Caco-2 (cell line): ENCODE measurements at regions of chr20 and their contacts with region 1.

Region 1: DNA sequence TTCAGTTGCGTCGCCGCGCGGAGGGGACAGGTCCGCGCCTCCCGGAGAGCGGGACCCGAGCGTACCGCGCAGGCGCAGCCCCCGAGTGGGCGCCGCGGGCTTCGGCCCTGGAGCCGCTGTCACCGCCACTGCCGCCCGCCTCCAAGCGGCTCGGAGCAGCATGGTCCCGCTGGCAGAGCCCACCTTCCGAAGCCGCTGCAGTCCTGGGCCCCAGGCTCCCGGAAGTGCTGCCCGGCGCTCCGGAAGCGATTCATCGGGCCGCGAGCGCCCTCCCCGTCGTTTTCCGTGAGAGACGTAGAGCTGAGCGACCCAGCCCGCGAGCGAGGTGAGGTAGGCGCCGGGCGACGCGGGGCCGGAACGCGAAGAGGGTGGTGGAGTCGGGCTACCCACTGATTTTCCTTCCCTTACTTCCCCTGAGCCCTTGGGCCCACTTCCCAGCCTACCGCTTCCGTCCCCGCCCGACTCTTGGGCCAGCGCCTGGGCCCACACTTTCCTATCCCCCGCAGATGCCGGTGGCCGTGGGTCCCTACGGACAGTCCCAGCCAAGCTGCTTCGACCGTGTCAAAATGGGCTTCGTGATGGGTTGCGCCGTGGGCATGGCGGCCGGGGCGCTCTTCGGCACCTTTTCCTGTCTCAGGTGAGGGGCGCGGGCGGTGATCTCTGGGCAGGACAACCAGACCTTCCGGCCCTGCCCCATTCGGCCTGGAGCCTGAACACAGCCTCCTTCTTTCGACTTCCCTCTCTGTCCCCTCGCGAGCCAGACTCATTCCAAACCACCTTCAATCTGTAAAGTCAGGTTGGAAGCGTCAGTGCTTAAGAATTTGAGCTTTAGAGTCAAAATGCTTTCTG is at the starts of genes NFS1 and ROMO1:
- DNase-seq: peak; percentile 95 to 98
- H3K4me3 ChIP-seq: peak within 1 kb of the TSS; percentile 93
- H3K4me3 Mint-ChIP-seq: peak within 1 kb of the TSS; percentile 91
- H3K27ac Mint-ChIP-seq: peak within 1 kb of the TSS; percentile 85
- H3K4me1 ChIP-seq: peaks cover 22% of the 10 kb centered on the region
- H3K4me1 Mint-ChIP-seq: peaks cover 35% of the 10 kb centered on the region
- H3K27me3 ChIP-seq: no peaks in the 10 kb centered on the region
- H3K27me3 Mint-ChIP-seq: no peaks in the 10 kb centered on the region
- CTCF ChIP-seq: peak; percentile 32 to 52
- total RNA-seq, gene NFS1: 69.8 and 77.1 TPM in 2 replicates
- total RNA-seq, gene ROMO1: 354 and 357 TPM in 2 replicates

Region 2: GRCh38 chr20:35463455-35464300 is 235.7 kb before region 1 on chr20:
- CTCF ChIA-PET with region 1: no interaction called
- POLR2A ChIA-PET with region 1: no interaction called
- intact Hi-C with region 1: loop called (anchors 5 kb)
- DNase-seq: peak; percentile 83 to 88
- H3K4me3 ChIP-seq: no peak overlapping the region
- H3K4me3 Mint-ChIP-seq: no peak overlapping the region
- H3K27ac Mint-ChIP-seq: no peak overlapping the region
- H3K4me1 ChIP-seq: peaks cover 13% of the 10 kb centered on the region
- H3K4me1 Mint-ChIP-seq: peaks cover 18% of the 10 kb centered on the region
- H3K27me3 ChIP-seq: no peaks in the 10 kb centered on the region
- H3K27me3 Mint-ChIP-seq: no peaks in the 10 kb centered on the region
- CTCF ChIP-seq: peak; percentile 96 to 97

Region 3: DNA sequence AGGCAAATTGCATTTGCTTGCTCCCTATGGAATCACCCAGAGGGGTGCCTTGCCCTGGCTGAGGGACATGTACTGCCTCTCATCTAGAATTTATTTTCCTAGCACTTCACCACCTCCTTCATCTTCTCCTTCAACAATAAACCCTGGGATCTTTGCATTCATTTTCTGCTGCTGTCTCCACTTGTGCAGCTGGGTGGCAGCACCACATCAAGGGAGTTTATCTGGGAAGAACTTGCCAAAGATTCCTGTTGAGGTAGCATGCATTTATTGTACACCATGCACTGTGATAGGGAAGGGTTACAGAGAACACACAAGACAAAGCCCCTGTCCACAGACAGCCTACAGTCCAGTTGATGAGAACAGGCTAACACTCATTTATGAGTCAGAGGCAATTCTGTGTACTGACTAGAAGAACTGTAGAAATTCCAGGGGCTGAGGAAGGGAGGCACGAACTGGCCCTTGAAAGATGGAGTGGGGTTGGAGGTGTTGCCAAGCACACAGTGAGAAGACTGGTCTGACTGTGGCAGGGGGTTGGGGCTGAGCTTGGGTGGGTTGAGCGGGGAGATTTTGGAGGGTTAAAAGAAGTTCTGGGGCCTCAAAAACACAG is 187.4 kb before region 1 on chr20:
- CTCF ChIA-PET with region 1: interaction called, 4 read pairs
- POLR2A ChIA-PET with region 1: no interaction called
- intact Hi-C with region 1: loop called (anchors 1 kb)
- DNase-seq: peak in 1 of 2 experiments; percentile 68
- H3K4me3 ChIP-seq: no peak overlapping the region
- H3K4me3 Mint-ChIP-seq: no peak overlapping the region
- H3K27ac Mint-ChIP-seq: no peak overlapping the region
- H3K4me1 ChIP-seq: no peaks in the 10 kb centered on the region
- H3K4me1 Mint-ChIP-seq: no peaks in the 10 kb centered on the region
- H3K27me3 ChIP-seq: no peaks in the 10 kb centered on the region
- H3K27me3 Mint-ChIP-seq: no peaks in the 10 kb centered on the region
- CTCF ChIP-seq: peak; percentile 88 to 92

Region 4: GRCh38 chr20:35561268-35561667 is 138.1 kb before region 1 on chr20:
- CTCF ChIA-PET with region 1: no interaction called
- POLR2A ChIA-PET with region 1: no interaction called
- intact Hi-C with region 1: loop called (anchors 2 kb)
- DNase-seq: peak; percentile 75 to 79
- H3K4me3 ChIP-seq: no peak overlapping the region
- H3K4me3 Mint-ChIP-seq: no peak overlapping the region
- H3K27ac Mint-ChIP-seq: no peak overlapping the region
- H3K4me1 ChIP-seq: no peaks in the 10 kb centered on the region
- H3K4me1 Mint-ChIP-seq: peaks cover 4% of the 10 kb centered on the region
- H3K27me3 ChIP-seq: no peaks in the 10 kb centered on the region
- H3K27me3 Mint-ChIP-seq: no peaks in the 10 kb centered on the region
- CTCF ChIP-seq: peak; percentile 51 to 86

Region 5: GRCh38 chr20:35568645-35569262 is 130.6 kb before region 1 on chr20:
- CTCF ChIA-PET with region 1: interaction called, 6 read pairs
- POLR2A ChIA-PET with region 1: interaction called, 4 read pairs
- intact Hi-C with region 1: loop called (anchors 1 kb)
- DNase-seq: peak; percentile 80 to 81
- H3K4me3 ChIP-seq: no peak overlapping the region
- H3K4me3 Mint-ChIP-seq: no peak overlapping the region
- H3K27ac Mint-ChIP-seq: no peak overlapping the region
- H3K4me1 ChIP-seq: no peaks in the 10 kb centered on the region
- H3K4me1 Mint-ChIP-seq: peaks cover 15% of the 10 kb centered on the region
- H3K27me3 ChIP-seq: no peaks in the 10 kb centered on the region
- H3K27me3 Mint-ChIP-seq: peaks cover 3% of the 10 kb centered on the region
- CTCF ChIP-seq: peak; percentile 82 to 84

Region 6: GRCh38 chr20:35664544-35665221 is 34.7 kb before region 1 on chr20 and contains the starts of genes CPNE1 and RBM12:
- CTCF ChIA-PET with region 1: interaction called, 4 read pairs
- POLR2A ChIA-PET with region 1: interaction called, 32 read pairs
- intact Hi-C with region 1: loop called (anchors 2 kb)
- DNase-seq: peak; percentile 99
- H3K4me3 ChIP-seq: peak within 1 kb of the TSS; percentile 87
- H3K4me3 Mint-ChIP-seq: peak within 1 kb of the TSS; percentile 84
- H3K27ac Mint-ChIP-seq: peak within 1 kb of the TSS; percentile 96
- H3K4me1 ChIP-seq: peaks cover 30% of the 10 kb centered on the region
- H3K4me1 Mint-ChIP-seq: peaks cover 22% of the 10 kb centered on the region
- H3K27me3 ChIP-seq: no peaks in the 10 kb centered on the region
- H3K27me3 Mint-ChIP-seq: no peaks in the 10 kb centered on the region
- CTCF ChIP-seq: no peak
- total RNA-seq, gene CPNE1: 815 and 833 TPM in 2 replicates
- total RNA-seq, gene RBM12: 146 and 147 TPM in 2 replicates

Region 7: DNA sequence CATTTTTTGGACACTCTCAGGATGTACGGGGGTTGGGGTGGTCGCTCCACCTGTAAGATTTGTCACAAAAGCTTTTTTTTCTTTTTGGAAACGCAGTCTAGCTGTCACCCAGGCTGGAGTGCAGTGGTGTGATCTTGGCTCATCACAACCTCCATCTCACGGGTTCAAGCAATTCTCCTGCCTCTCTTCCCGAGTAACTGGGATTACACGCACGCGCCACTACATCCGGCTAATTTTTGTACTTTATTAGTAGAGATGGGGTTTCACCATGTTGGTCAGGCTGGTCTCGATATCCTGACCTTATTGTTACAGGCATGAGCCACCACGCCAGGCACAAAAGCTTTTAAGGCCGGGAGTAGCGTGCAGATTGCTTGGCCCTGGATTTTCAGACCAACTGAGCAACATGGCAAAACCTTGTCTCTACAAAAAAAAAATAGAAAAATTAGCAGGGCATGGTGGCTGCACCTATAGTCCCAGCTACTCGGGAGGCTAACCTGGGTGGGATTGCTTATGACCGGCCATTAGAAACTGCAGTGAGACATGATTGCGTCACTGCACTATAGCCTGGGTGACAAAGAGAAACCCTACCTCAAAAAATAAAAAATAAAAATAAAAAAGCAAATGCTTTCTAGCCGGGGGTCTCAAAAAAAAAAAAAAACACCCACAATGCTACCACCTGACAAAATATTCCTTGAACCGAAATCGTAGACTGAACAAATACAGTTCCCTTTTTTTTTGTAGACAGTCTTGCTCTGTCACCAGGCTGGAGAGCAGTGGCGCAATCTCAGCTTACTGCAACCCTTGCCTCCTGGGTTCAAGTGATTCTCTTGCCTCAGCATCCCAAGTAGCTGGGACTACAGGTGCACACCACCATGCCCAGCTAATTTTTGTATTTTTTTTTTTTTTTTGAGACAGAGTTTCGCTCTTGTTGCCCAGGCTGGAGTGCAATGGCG is 27.7 kb after region 1 on chr20:
- CTCF ChIA-PET with region 1: no interaction called
- POLR2A ChIA-PET with region 1: interaction called, 13 read pairs
- intact Hi-C with region 1: no loop called
- DNase-seq: peak; percentile 14 to 39
- H3K4me3 ChIP-seq: no peak overlapping the region
- H3K4me3 Mint-ChIP-seq: peak overlapping the region; percentile 33
- H3K27ac Mint-ChIP-seq: peak overlapping the region; percentile 71
- H3K4me1 ChIP-seq: peaks cover 31% of the 10 kb centered on the region
- H3K4me1 Mint-ChIP-seq: peaks cover 38% of the 10 kb centered on the region
- H3K27me3 ChIP-seq: no peaks in the 10 kb centered on the region
- H3K27me3 Mint-ChIP-seq: no peaks in the 10 kb centered on the region
- CTCF ChIP-seq: no peak